Esophagus squamous epithelium (tissue), 5 donors: ENCODE measurements at regions of chr6 and their contacts with region 1.

Region 1: GRCh38 chr6:96626759-96627364 is 63.9 kb downstream of the FHL5 start:
- DNase-seq: no peak
- H3K4me3 ChIP-seq: no peak overlapping the region
- H3K27ac ChIP-seq: no peak overlapping the region
- H3K4me1 ChIP-seq: no peaks in the 10 kb centered on the region
- H3K27me3 ChIP-seq: no peaks in the 10 kb centered on the region
- CTCF ChIP-seq: peak in 5 of 6 experiments; percentile 13 to 42 (median 21)
- POLR2A ChIP-seq: no peak

Region 2: GRCh38 chr6:97068211-97068610 is 441.3 kb after region 1 on chr6:
- intact Hi-C with region 1: loop called (anchors 10 kb)
- DNase-seq: no peak
- H3K4me3 ChIP-seq: no peak overlapping the region
- H3K27ac ChIP-seq: no peak overlapping the region
- H3K4me1 ChIP-seq: no peaks in the 10 kb centered on the region
- H3K27me3 ChIP-seq: peaks cover 0 to 6% (median 2%) of the 10 kb centered on the region in 4 donors
- CTCF ChIP-seq: peak in 4 of 6 experiments; percentile 16 to 57 (median 35)
- POLR2A ChIP-seq: no peak